ENCODE measurements at regions of chr5 and their contacts with region 1.

Region 1: DNA sequence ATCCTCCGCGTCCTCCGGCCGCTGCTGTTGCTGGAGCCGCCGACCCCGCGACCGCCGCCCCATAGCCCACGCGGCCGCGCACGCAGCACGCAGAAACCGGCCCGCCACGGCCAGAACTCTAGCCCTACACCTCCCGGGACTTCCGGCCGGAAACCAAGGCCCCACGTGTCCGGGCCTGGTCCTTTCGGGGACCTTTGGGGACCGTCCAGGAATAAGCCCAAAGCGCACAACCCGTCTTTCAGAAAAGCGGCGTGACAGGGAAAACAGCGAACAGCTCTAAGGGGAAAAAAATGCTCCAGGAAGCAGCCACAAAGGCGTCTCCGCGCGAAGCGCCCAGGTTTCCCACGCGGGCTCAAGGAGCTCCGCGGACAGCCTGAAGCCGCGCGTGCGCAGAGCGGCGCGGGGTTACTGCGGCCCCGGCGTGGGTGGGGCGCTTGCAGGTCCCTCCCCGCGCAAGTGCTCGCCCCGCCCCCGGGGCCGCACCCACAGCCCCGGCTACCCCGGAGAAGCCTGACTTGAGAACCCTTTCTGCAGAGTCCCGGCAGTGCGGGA is at the starts of genes NSUN2 and SRD5A1:
- DNase-seq: peak; percentile 95 to 96
- ATAC-seq: peak; percentile 99
- H3K4me3 ChIP-seq: peak within 1 kb of the TSS; percentile 69 to 90
- H3K27ac ChIP-seq: peak within 1 kb of the TSS; percentile 69 to 91
- H3K4me1 ChIP-seq: no peaks in the 10 kb centered on the region
- H3K27me3 ChIP-seq: no peaks in the 10 kb centered on the region
- total RNA-seq, gene NSUN2: 38.6 to 45.0 TPM
- total RNA-seq, gene SRD5A1: 5.6 to 7.7 TPM

Region 2: GRCh38 chr5:6712577-6713275 is 79.7 kb after region 1 on chr5:
- intact Hi-C with region 1: loop called (anchors 2 kb)
- DNase-seq: peak; percentile 98 to 99
- ATAC-seq: peak; percentile 95
- H3K4me3 ChIP-seq: peak overlapping the region; percentile 56 to 62
- H3K27ac ChIP-seq: peak overlapping the region; percentile 51 to 81
- H3K4me1 ChIP-seq: peaks cover 4 to 7% of the 10 kb centered on the region in 2 donors
- H3K27me3 ChIP-seq: no peaks in the 10 kb centered on the region

Region 3: DNA sequence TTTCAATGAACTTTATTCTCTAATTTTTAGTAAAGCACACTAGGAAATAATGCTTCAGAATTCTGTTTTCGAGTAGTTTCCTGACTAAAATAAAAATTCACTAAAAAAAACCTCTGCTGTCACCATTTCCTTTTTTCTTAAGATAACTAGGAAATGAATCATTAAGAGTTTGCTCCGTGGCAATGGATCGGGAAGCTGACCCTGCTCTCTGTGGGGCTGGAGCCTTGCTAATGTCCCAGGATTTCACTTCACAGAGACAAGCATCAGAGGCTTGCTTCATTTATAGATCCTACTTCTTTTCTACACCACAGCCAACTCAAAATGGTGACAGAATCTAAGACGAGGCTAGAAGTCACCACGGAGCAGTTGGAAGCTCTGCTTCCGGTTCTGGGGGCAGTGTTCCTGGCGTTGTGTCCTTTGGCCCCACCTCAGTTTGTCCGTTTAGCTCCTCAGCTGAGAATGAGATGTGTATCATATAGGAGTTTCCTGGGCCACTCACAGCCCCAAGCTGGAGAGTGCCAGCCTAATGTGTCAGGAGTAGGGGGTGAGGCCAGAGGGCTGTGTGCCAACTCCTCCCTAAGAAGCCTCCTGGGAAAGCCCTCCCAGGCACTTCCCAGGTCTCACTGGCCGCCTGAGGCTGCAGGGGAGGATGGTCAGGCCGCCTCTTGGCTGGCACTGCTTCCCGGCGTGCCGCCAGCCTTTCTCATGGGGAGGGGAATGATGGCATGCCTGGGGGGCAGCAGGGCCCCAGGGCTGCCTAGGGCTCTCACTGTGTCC is 99.8 kb after region 1 on chr5:
- intact Hi-C with region 1: loop called in 1 of 2 experiments (anchors 5 kb)
- DNase-seq: peak; percentile 71 to 89
- ATAC-seq: peak; percentile 65
- H3K4me3 ChIP-seq: no peak overlapping the region
- H3K27ac ChIP-seq: peak overlapping the region in 1 of 2 donors; percentile 65
- H3K4me1 ChIP-seq: peaks cover 0 to 3% of the 10 kb centered on the region in 2 donors
- H3K27me3 ChIP-seq: no peaks in the 10 kb centered on the region

Region 4: DNA sequence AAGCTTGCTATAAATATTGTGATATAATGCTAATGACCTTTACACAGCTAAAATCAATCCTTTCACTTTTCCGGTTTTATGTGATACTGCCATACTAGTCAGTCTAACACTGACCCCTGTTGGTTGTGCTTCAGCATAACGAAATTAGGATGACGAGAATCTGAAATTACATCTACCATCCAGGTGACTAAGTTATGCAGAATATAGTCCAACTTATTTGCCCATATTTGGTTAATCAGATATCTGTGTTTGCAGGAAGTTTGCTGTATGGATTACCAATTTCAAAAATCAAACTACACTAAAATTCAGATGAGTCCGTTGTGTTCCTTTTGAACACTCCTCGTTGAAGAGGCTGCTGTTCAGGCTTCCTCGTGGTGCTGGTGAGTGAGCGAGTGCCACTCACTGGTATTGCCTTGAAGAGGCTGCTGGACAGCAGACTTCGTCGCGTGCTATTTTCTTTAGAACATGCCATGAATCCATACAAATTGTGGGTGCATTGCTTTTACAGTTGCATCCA is 112.8 kb after region 1 on chr5:
- intact Hi-C with region 1: loop called (anchors 2 to 5 kb)
- DNase-seq: no peak
- ATAC-seq: peak; percentile 39
- H3K4me3 ChIP-seq: no peak overlapping the region
- H3K27ac ChIP-seq: no peak overlapping the region
- H3K4me1 ChIP-seq: no peaks in the 10 kb centered on the region
- H3K27me3 ChIP-seq: no peaks in the 10 kb centered on the region